SK-N-SH (cell line): ENCODE measurements at regions of chr19 and their contacts with region 1.

Region 1: GRCh38 chr19:33186431-33187182 is 7.5 kb upstream of the LRP3 start:
- DNase-seq: no peak
- H3K4me3 ChIP-seq: no peak overlapping the region
- H3K27ac ChIP-seq: no peak overlapping the region
- H3K4me1 ChIP-seq: peaks cover 0 to 2% of the 10 kb centered on the region in 2 experiments; a peak in 1 of 4 replicates
- H3K27me3 ChIP-seq: no peaks in the 10 kb centered on the region
- CTCF ChIP-seq: no peak
- EP300 ChIP-seq: no peak
- RAD21 ChIP-seq: no peak

Region 2: DNA sequence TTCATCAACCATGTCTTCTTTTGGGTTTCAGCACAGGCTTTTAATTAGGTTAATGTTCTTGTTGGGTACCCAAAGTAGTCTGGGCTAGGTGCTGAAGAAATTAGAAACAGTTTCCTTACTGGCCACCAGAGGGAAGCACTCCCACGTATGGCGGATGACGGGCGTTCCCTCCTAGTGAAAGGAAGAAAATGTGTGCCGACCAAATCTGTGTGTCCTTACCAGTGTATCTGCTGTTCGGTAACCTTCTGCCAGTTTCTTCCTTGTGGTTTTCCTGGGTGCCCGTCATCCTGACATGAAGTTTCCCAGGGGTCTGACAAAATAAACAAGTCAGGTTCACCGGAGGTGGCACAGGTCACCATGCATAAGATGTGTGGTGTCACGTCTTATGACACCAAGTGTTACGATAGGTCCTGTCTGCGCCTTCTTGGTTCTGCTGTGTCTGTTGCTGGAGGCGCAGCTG is 60.6 kb before region 1 on chr19:
- CTCF ChIA-PET with region 1: interaction called, 157 read pairs
- POLR2A ChIA-PET with region 1: interaction called, 5 read pairs
- DNase-seq: peak; percentile 81
- H3K4me3 ChIP-seq: no peak overlapping the region; a peak in 1 of 4 replicates
- H3K27ac ChIP-seq: no peak overlapping the region
- H3K4me1 ChIP-seq: peaks cover 0 to 5% of the 10 kb centered on the region in 2 experiments; a peak in 1 of 4 replicates
- H3K27me3 ChIP-seq: no peaks in the 10 kb centered on the region
- CTCF ChIP-seq: peak; percentile 83
- EP300 ChIP-seq: no peak
- RAD21 ChIP-seq: peak; percentile 87

Region 3: DNA sequence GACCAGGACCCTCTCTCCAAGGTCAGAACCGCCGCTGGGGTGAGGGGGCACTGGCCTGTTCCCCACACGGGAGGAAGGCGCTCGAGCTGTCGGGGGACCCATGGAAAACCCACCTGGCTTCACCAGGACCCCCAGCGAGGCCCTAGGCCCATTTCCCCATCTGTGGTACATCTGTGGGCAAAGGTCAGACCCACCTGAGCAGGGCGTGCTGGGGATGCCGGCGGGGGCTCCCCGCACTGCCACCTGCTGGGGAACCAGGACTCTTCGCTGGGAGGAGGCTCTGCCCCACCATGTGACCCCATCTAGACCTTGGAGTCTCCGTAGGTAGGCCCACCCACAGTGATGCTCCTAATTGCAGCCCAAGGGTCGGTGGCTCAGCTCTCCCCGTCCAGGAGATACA is 54.2 kb before region 1 on chr19:
- CTCF ChIA-PET with region 1: interaction called, 157 read pairs
- POLR2A ChIA-PET with region 1: no interaction called
- DNase-seq: peak; percentile 65
- H3K4me3 ChIP-seq: no peak overlapping the region
- H3K27ac ChIP-seq: no peak overlapping the region; a peak in 1 of 4 replicates
- H3K4me1 ChIP-seq: peaks cover 0 to 10% of the 10 kb centered on the region in 2 experiments; a peak in 1 of 4 replicates
- H3K27me3 ChIP-seq: no peaks in the 10 kb centered on the region
- CTCF ChIP-seq: peak; percentile 42
- EP300 ChIP-seq: no peak
- RAD21 ChIP-seq: no peak

Region 4: DNA sequence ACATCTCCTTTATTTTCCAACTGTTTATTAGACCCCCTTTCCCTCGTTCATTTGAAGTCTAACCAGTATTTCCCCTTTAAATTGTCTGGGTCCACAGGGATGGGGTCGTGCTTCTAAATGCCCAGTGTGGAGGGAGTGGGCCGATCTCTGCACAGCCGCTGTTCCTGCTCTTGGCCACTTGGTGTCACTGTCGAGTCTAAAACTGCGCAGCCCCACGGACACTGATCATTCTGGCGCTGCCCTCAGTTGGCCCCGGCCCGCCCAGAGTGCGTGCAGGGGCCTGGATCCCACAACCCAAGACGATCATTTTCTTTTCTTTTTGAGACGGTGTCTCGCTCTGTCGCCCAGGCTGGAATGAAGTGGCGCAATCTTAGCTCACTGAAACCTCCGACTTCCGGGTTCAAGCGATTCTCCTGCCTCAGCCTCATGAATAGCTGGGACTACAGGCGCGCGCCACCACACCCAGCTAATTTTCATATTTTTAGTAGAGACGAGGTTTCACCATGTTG is 42.7 kb before region 1 on chr19:
- CTCF ChIA-PET with region 1: interaction called, 52 read pairs
- POLR2A ChIA-PET with region 1: no interaction called
- DNase-seq: peak; percentile 88
- H3K4me3 ChIP-seq: peak overlapping the region in 1 of 2 experiments; percentile 16; a peak in 1 of 4 replicates
- H3K27ac ChIP-seq: no peak overlapping the region
- H3K4me1 ChIP-seq: peaks cover 0 to 4% of the 10 kb centered on the region in 2 experiments; a peak in 1 of 4 replicates
- H3K27me3 ChIP-seq: no peaks in the 10 kb centered on the region
- CTCF ChIP-seq: peak; percentile 91
- EP300 ChIP-seq: no peak
- RAD21 ChIP-seq: peak; percentile 90

Region 5: DNA sequence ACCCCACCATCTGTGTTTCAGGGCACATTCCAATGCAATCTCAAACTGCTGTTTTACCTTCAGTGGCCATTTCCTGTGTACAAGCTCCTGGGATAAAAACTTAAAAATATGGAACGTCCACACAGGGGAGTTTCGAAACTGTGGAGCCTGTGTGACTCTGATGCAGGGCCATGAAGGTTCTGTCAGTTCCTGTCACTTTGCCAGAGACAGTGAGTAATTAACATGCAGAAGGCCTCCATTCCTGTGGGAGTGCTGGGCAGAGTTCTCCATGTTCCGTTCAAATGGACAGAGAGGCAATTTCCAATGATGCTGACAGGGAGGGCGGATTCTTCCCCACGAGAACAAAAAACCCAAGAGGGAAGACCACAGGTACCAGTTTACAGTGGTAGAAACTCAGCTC is 30.3 kb before region 1 on chr19:
- CTCF ChIA-PET with region 1: interaction called, 30 read pairs
- POLR2A ChIA-PET with region 1: no interaction called
- DNase-seq: no peak
- H3K4me3 ChIP-seq: no peak overlapping the region
- H3K27ac ChIP-seq: no peak overlapping the region
- H3K4me1 ChIP-seq: no peaks in the 10 kb centered on the region
- H3K27me3 ChIP-seq: no peaks in the 10 kb centered on the region
- CTCF ChIP-seq: no peak
- EP300 ChIP-seq: no peak
- RAD21 ChIP-seq: no peak

Region 6: GRCh38 chr19:33203529-33203928 is 16.9 kb after region 1 on chr19:
- CTCF ChIA-PET with region 1: interaction called, 44 read pairs
- POLR2A ChIA-PET with region 1: no interaction called
- DNase-seq: peak; percentile 34
- H3K4me3 ChIP-seq: no peak overlapping the region
- H3K27ac ChIP-seq: no peak overlapping the region
- H3K4me1 ChIP-seq: no peaks in the 10 kb centered on the region
- H3K27me3 ChIP-seq: no peaks in the 10 kb centered on the region
- CTCF ChIP-seq: no peak
- EP300 ChIP-seq: no peak
- RAD21 ChIP-seq: no peak

Region 7: DNA sequence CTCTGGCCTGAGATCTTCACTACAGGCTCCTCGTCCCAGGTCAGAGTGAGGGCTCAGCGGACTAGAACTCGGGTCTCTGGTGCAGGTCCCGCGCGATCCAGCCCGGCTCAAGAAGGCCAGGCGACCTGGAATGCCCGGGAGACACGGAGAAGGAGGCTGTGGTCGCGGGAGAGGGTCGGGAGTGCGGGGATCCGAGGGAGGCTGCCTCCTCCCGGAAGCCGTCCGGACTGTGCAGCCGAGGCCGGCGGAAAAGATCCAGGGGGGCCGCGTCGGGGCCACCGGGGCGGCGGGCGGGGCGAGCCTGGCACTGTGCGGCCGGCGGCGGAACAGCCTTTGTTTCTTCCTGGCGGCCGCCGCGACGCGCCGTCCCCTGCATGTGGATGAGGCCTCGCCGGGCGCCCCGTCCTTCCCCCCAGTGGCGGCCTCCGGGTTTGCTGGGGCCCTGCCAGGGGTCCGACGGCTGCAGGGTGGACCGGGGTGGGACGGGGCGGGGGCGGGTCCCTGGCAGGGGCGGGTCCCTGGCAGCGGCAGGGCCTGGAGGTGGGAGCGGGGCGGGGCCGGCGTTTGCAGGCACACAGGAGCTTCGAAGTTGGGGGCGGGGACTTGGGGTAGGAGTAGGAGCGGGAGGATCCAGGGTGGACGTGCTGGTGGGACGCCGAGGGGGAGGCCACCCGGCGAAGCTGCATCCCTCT is 40.1 kb after region 1 on chr19:
- CTCF ChIA-PET with region 1: interaction called, 10 read pairs
- POLR2A ChIA-PET with region 1: no interaction called
- DNase-seq: peak; percentile 85
- H3K4me3 ChIP-seq: no peak overlapping the region; a peak in 1 of 4 replicates
- H3K27ac ChIP-seq: no peak overlapping the region
- H3K4me1 ChIP-seq: no peaks in the 10 kb centered on the region; a peak in 1 of 4 replicates
- H3K27me3 ChIP-seq: peaks cover 38% of the 10 kb centered on the region
- CTCF ChIP-seq: no peak
- EP300 ChIP-seq: no peak
- RAD21 ChIP-seq: no peak